Spleen (tissue), 13 donors: ENCODE measurements at regions of chr18 and their contacts with region 1.

Region 1: DNA sequence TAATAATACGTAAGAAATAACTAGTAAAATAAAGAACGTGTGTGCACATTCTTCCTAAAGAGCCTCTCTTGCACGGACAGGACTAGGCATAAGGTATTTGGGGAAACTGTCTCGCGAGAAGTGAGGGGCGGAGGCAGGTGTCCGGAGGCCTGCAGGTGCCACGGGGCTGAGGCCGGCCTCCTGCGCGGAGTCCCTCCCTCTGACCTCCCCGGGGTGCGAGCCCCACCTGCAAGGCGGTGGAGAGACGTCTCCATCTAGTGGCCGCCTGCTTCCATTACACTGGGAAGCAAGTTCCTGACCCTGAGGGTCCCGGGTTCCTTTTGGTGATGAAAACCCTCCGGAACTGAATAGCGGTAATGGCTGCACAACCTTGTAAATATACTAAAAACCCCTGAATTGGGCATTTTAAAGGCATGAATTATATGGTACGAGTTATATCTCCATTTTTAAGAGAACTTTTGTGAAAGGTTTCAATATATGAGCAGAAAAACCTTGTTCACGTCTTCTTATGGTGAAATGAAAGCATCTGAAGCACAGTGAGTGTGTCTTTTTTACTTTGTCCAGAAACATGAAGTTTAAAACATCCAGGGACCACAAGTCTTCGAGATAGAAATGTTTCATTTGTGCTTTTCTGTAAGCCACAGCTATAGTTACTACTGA is 35.5 kb upstream of the CTDP1 start:
- DNase-seq: peak; percentile 91
- H3K4me3 ChIP-seq: peak overlapping the region in 1 of 8 donors; percentile 24
- H3K27ac ChIP-seq: no peak overlapping the region
- H3K4me1 ChIP-seq: peaks cover 12 to 26% (median 20%) of the 10 kb centered on the region in 6 donors
- H3K27me3 ChIP-seq: peaks cover 0 to 13% (median 0%) of the 10 kb centered on the region in 7 donors
- CTCF ChIP-seq: peak; percentile 75 to 96 (median 92)
- POLR2A ChIP-seq: no peak

Region 2: DNA sequence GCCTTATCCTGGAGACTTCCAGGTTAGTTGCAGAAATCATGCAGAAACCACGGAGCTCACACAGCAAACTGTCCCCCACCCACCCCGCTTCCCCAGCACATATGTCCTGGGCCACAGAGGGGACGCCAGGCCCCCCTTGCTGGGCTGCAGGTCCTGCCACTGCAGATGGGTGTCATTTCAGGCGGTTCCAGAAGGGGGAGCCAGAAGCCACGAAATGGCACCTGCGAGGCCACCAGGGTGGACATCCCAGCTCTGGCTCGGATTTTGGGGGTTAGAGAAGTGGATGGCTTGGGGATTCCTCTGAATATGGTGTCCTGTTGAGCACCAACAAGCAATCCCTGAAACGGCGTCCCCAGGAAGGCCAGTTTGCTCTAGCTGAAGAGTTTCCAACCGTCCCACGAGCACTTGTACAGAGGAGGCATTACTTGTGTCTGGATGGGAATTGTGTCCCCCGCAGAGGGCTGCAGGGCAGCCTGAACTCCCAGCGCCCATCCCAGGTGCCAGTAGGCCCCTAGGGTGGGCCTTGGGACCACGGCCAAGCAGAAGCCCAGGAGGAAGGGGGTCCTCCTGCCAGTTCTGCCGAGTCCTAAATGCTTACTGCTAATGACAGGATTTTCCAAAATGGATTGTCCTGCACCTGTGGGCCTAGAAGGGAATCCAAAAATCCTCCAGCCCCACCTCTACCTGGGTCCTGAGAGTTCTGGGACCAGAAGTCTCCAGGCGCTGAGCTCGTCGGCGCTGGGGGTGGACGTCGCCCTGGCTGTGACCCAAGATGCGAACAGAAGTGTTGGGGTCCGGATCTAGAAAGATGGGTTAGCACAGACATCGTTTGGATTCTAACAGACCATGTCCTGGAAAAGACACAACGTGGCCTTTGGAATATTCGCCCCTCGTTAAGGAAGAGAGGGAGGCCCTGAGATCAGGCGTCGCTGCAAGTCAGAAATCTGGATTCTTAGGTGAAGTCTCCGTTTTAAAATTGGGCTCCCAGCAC is 263.0 kb before region 1 on chr18:
- intact Hi-C with region 1: loop called (anchors 2 kb)
- DNase-seq: peak; percentile 89
- H3K4me3 ChIP-seq: no peak overlapping the region
- H3K27ac ChIP-seq: no peak overlapping the region
- H3K4me1 ChIP-seq: peaks cover 6 to 29% (median 11%) of the 10 kb centered on the region in 6 donors
- H3K27me3 ChIP-seq: peaks cover 0 to 5% (median 0%) of the 10 kb centered on the region in 7 donors
- CTCF ChIP-seq: peak; percentile 74 to 93 (median 82)
- POLR2A ChIP-seq: no peak

Region 3: GRCh38 chr18:79912409-79912991 is 268.4 kb after region 1 on chr18:
- intact Hi-C with region 1: no loop called
- DNase-seq: peak; percentile 82
- H3K4me3 ChIP-seq: no peak overlapping the region
- H3K27ac ChIP-seq: peak overlapping the region in 7 of 8 donors; percentile 17 to 71 (median 50)
- H3K4me1 ChIP-seq: peaks cover 0 to 30% (median 7%) of the 10 kb centered on the region in 6 donors
- H3K27me3 ChIP-seq: no peaks in the 10 kb centered on the region
- CTCF ChIP-seq: no peak
- POLR2A ChIP-seq: no peak